Heart left ventricle (tissue), 16 donors: ENCODE measurements at regions of chr2 and their contacts with region 1.

Region 1: DNA sequence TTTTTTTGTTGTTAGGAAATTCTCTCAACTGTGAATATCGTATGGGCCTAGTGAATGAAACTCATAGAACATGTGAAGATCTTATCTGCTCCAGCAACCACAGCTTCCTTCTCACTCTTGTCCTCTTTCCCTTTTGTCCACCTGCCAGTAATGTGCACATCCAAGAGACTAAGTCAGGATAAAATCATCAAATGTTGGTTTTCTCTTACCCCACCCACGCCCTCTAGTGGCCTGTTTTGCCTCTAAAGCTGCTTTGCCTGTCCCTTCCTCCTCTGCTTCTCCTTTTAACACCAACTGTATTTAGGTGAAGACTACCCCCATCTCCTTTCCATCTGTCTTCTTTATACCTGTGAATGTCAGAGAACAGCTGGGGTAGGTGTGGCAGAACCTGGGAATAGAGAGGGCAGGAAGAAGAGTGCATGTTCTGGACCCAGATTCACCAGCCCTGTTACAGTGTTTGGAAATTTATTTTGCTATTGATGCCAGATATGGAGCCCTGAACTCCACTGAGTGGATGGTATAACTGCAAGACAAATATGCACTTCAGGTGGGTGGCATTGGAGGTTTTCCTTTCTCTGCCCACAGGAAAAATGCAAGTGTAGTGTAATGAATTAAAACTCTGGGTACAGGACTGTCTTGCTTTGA is 8.4 kb upstream of the MGAT5 start:
- DNase-seq: peak; percentile 76 to 86 (median 78)
- ATAC-seq: peak; percentile 41 to 71 (median 64)
- H3K4me3 ChIP-seq: no peak overlapping the region
- H3K27ac ChIP-seq: peak overlapping the region in 2 of 12 donors; percentile 50 to 52
- H3K4me1 ChIP-seq: peaks cover 3 to 80% (median 53%) of the 10 kb centered on the region in 12 donors
- H3K27me3 ChIP-seq: no peaks in the 10 kb centered on the region
- CTCF ChIP-seq: peak; percentile 62 to 84 (median 76)
- POLR2A ChIP-seq: no peak

Region 2: DNA sequence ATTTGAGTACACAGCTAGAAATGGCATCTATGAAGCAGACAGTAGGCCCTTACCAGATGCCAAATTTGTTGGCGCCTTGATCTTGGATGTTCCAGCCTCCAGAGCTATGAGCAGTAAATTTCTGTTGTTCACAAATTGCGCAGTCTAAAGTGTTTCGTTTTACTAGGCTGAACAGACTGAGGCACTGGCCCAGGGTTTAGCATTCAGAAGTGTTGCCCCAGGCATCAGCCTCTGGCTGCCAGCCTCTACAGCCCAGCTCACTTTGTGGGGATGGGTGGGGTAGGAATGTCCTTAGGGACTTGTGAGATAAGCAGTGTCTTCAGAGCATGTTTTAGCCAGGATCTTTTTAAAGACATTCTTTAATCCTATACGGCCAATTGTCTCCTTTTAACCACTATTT is 43.1 kb before region 1 on chr2:
- intact Hi-C with region 1: loop called in 1 of 10 experiments (anchors 5 kb)
- DNase-seq: no peak
- ATAC-seq: peak in 1 of 4 donors; percentile 14
- H3K4me3 ChIP-seq: no peak overlapping the region
- H3K27ac ChIP-seq: peak overlapping the region in 1 of 12 donors; percentile 2
- H3K4me1 ChIP-seq: peaks cover 19 to 98% (median 77%) of the 10 kb centered on the region in 12 donors
- H3K27me3 ChIP-seq: no peaks in the 10 kb centered on the region
- CTCF ChIP-seq: no peak
- POLR2A ChIP-seq: no peak

Region 3: GRCh38 chr2:134232868-134233727 is 12.4 kb before region 1 on chr2:
- intact Hi-C with region 1: no loop called
- DNase-seq: no peak
- ATAC-seq: peak in 1 of 4 donors; percentile 14
- H3K4me3 ChIP-seq: peak overlapping the region in 1 of 12 donors; percentile 10
- H3K27ac ChIP-seq: peak overlapping the region in 2 of 12 donors; percentile 15 to 74
- H3K4me1 ChIP-seq: peaks cover 0 to 58% (median 33%) of the 10 kb centered on the region in 12 donors
- H3K27me3 ChIP-seq: no peaks in the 10 kb centered on the region
- CTCF ChIP-seq: no peak
- POLR2A ChIP-seq: no peak

Region 4: DNA sequence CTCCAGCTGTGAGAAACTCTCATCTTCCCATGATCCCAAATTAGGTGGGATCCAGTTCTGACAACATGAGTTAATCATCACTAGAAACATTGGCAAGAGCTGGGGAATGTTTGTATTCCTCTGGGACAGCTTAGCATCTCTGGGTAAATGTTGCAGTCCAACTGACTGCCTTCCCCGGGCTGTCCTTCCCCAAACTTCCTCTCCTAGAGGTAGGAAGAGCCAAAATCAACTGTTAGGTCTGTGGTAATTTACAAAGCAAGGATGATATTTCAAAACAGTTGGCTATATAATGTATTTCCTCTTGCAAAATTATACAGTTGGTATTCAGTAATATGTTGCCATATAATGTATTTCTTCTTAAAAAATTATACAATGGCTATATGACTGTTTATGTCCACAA is 156.9 kb after region 1 on chr2:
- intact Hi-C with region 1: loop called in 4 of 10 experiments (anchors 10 kb)
- DNase-seq: peak in 3 of 5 donors; percentile 51 to 59 (median 53)
- ATAC-seq: peak; percentile 70 to 80 (median 72)
- H3K4me3 ChIP-seq: no peak overlapping the region
- H3K27ac ChIP-seq: peak overlapping the region in 11 of 12 donors; percentile 50 to 83 (median 74)
- H3K4me1 ChIP-seq: peaks cover 7 to 58% (median 30%) of the 10 kb centered on the region in 12 donors
- H3K27me3 ChIP-seq: no peaks in the 10 kb centered on the region
- CTCF ChIP-seq: no peak
- POLR2A ChIP-seq: no peak

Region 5: GRCh38 chr2:134411828-134412638 is 166.6 kb after region 1 on chr2:
- intact Hi-C with region 1: loop called in 9 of 10 experiments (anchors 5 to 10 kb)
- DNase-seq: peak in 4 of 5 donors; percentile 77 to 82 (median 78)
- ATAC-seq: peak; percentile 92 to 95 (median 94)
- H3K4me3 ChIP-seq: no peak overlapping the region
- H3K27ac ChIP-seq: peak overlapping the region in 9 of 12 donors; percentile 12 to 64 (median 42)
- H3K4me1 ChIP-seq: peaks cover 0 to 50% (median 38%) of the 10 kb centered on the region in 12 donors
- H3K27me3 ChIP-seq: no peaks in the 10 kb centered on the region
- CTCF ChIP-seq: peak; percentile 48 to 82 (median 71)
- POLR2A ChIP-seq: no peak

Region 6: DNA sequence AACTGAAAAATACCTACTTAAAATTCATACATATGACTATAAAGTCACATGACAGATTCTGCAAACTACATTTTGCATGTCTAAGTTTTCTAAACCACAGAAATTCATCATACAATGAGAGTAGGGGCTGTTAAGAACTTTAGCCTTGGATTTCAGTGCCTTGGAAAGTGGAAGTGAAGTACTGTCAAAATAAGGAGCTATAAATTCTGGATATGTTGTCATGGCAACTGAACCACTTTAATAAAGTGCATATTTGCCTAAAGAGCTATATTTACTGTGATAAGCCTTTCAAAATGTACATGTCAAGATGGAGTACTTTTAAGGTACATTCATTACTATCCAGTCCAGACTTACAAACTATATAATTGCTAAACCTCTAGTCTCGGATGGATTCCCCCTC is 1033.8 kb after region 1 on chr2:
- intact Hi-C with region 1: no loop called
- DNase-seq: no peak
- ATAC-seq: no peak
- H3K4me3 ChIP-seq: no peak overlapping the region
- H3K27ac ChIP-seq: no peak overlapping the region
- H3K4me1 ChIP-seq: no peaks in the 10 kb centered on the region
- H3K27me3 ChIP-seq: no peaks in the 10 kb centered on the region
- CTCF ChIP-seq: no peak
- POLR2A ChIP-seq: no peak